Activated CD8-positive, alpha-beta T cell treated with anti-CD3 and anti-CD28 coated beads for 36 hours (primary cell): ENCODE measurements at regions of chr19 and their contacts with region 1.

Region 1: GRCh38 chr19:4909897-4910593 is 744 bp downstream of the UHRF1 start:
- DNase-seq: peak; percentile 98
- ATAC-seq: peak; percentile 80
- H3K4me3 Mint-ChIP-seq: peak overlapping the region; percentile 95
- H3K27ac Mint-ChIP-seq: peak overlapping the region; percentile 87
- H3K4me1 Mint-ChIP-seq: peaks cover 46% of the 10 kb centered on the region
- H3K27me3 Mint-ChIP-seq: no peaks in the 10 kb centered on the region
- CTCF ChIP-seq: no peak

Region 2: GRCh38 chr19:4867534-4868285 is 42.3 kb before region 1 on chr19 and contains the start of gene PLIN3:
- CTCF ChIA-PET with region 1: interaction called, 110 read pairs
- POLR2A ChIA-PET with region 1: interaction called, 82 read pairs
- intact Hi-C with region 1: loop called (anchors 5 kb)
- DNase-seq: peak; percentile 97
- ATAC-seq: peak; percentile 95
- H3K4me3 Mint-ChIP-seq: peak within 1 kb of the TSS; percentile 75
- H3K27ac Mint-ChIP-seq: peak within 1 kb of the TSS; percentile 59
- H3K4me1 Mint-ChIP-seq: peaks cover 15% of the 10 kb centered on the region
- H3K27me3 Mint-ChIP-seq: peaks cover 2% of the 10 kb centered on the region
- CTCF ChIP-seq: no peak
- total RNA-seq, gene PLIN3: 15.5 to 23.5 TPM

Region 3: DNA sequence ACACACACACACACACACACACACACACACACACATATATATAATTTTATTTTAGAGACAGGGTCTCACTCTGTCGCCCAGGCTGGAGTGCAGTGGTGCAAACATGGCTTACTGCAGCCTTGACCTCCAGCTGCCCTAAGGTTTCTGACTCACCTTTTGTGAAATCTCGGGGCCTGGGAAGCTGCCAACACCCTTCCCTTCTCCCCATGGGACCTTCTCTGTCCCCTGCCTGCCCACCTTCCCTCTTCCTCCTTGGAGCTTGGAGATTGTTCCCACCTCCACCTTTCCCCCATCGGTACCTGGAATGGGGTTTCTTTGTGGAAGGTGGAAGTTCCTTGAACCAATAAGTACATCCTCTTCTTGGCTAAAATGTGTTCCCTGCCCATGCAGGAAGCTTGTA is 13.7 kb before region 1 on chr19:
- CTCF ChIA-PET with region 1: no interaction called
- POLR2A ChIA-PET with region 1: interaction called, 10 read pairs
- intact Hi-C with region 1: no loop called
- DNase-seq: no peak
- ATAC-seq: no peak
- H3K4me3 Mint-ChIP-seq: no peak overlapping the region
- H3K27ac Mint-ChIP-seq: peak overlapping the region; percentile 28
- H3K4me1 Mint-ChIP-seq: peaks cover 7% of the 10 kb centered on the region
- H3K27me3 Mint-ChIP-seq: no peaks in the 10 kb centered on the region
- CTCF ChIP-seq: no peak

Region 4: DNA sequence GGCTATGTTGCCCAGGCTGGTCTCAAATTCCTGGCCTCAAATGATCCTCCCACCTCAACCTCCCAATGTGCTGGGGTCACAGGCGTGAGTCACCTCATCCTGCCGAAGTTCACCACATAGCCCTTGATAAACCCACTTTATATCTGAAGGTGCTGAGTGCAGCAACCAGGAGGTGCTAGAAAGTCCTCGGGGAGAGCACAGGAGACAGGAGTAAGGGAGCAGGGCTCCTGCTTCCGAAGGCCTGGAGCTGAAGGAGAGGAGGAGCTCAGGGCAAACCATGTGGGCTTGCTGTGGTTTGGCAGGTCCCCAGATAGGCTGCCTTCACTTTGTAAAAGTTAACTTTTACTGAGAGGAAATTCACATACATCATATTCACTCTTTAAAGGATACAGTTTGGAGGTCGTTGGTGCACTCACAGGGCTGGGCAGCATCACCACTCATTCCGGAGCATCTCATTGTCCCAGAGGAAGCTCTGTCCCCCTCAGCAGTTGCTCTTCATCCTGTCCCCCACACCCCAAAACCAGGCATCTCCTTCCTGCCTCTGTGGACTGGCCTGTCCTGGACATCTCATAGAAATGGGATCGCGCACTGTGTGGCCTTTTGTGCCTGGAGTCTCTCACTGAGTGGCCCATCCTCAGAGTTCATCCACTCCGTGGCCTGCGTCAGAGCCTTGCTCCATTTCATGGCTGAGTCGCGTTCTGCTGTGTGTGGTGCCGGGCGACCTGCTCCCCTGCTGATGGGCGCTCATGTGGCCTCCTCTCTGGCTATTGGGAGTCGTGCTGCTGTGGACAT is 108.4 kb after region 1 on chr19:
- CTCF ChIA-PET with region 1: no interaction called
- POLR2A ChIA-PET with region 1: no interaction called
- intact Hi-C with region 1: no loop called
- DNase-seq: no peak
- ATAC-seq: no peak
- H3K4me3 Mint-ChIP-seq: no peak overlapping the region
- H3K27ac Mint-ChIP-seq: no peak overlapping the region
- H3K4me1 Mint-ChIP-seq: no peaks in the 10 kb centered on the region
- H3K27me3 Mint-ChIP-seq: no peaks in the 10 kb centered on the region
- CTCF ChIP-seq: no peak

Region 5: GRCh38 chr19:5038631-5039271 is 128.7 kb after region 1 on chr19:
- CTCF ChIA-PET with region 1: no interaction called
- POLR2A ChIA-PET with region 1: no interaction called
- intact Hi-C with region 1: no loop called
- DNase-seq: no peak
- ATAC-seq: peak; percentile 68
- H3K4me3 Mint-ChIP-seq: no peak overlapping the region
- H3K27ac Mint-ChIP-seq: no peak overlapping the region
- H3K4me1 Mint-ChIP-seq: no peaks in the 10 kb centered on the region
- H3K27me3 Mint-ChIP-seq: no peaks in the 10 kb centered on the region
- CTCF ChIP-seq: peak; percentile 62